ENCODE measurements at regions of chr3 and their contacts with region 1.

Region 1: DNA sequence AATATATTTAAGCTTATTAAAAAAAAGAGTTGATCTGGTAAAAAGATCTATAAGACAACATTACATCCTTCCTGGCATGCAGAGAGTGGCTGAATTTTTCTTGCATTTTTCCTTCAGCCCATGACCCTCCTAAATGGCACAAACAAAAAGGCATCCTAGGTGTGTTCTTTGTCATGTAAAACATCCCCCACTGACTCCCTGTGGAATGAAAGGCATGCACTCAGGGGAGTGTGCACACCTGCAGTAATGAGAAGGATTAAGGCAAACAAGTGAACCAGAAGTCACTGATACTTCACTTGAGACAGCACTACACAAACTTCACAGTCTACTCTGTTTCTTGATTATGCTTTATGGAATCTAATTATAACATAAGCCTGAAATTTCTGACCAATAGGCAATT is 195.0 kb downstream of the RBMS3 start:
- DNase-seq: no peak
- ATAC-seq: no peak
- H3K4me3 Mint-ChIP-seq: no peak overlapping the region
- H3K27ac Mint-ChIP-seq: no peak overlapping the region
- H3K4me1 Mint-ChIP-seq: no peaks in the 10 kb centered on the region
- H3K27me3 Mint-ChIP-seq: peaks cover 0 to 4% (median 0%) of the 10 kb centered on the region in 5 donors

Region 2: GRCh38 chr3:29525254-29525881 is 49.5 kb after region 1 on chr3:
- POLR2A ChIA-PET with region 1: interaction called, 11 read pairs
- DNase-seq: no peak
- ATAC-seq: no peak
- H3K4me3 Mint-ChIP-seq: no peak overlapping the region
- H3K27ac Mint-ChIP-seq: no peak overlapping the region
- H3K4me1 Mint-ChIP-seq: no peaks in the 10 kb centered on the region
- H3K27me3 Mint-ChIP-seq: peaks cover 0 to 5% (median 0%) of the 10 kb centered on the region in 5 donors

Measured in naive thymus-derived CD8-positive, alpha-beta T cell (primary cell).